AG04450 (cell line): ENCODE measurements at regions of chr4 and their contacts with region 1.

Region 1: GRCh38 chr4:80266253-80266901 is at the start of gene FGF5:
- DNase-seq: peak; percentile 85
- H3K4me3 ChIP-seq: peak within 1 kb of the TSS; percentile 63
- H3K27ac ChIP-seq: peak within 1 kb of the TSS; percentile 96
- H3K27me3 ChIP-seq: no peaks in the 10 kb centered on the region
- CTCF ChIP-seq: no peak
- polyA plus RNA-seq, gene FGF5: 39.9 and 40.7 TPM in 2 replicates

Region 2: GRCh38 chr4:80215449-80216052 is 50.8 kb before region 1 on chr4:
- CTCF ChIA-PET with region 1: interaction called, 13 read pairs
- POLR2A ChIA-PET with region 1: interaction called, 8 read pairs
- DNase-seq: no peak
- H3K4me3 ChIP-seq: no peak overlapping the region
- H3K27ac ChIP-seq: no peak overlapping the region
- H3K27me3 ChIP-seq: no peaks in the 10 kb centered on the region
- CTCF ChIP-seq: peak; percentile 67

Region 3: GRCh38 chr4:80255329-80256095 is 10.9 kb before region 1 on chr4:
- CTCF ChIA-PET with region 1: interaction called, 7 read pairs
- POLR2A ChIA-PET with region 1: interaction called, 25 read pairs
- DNase-seq: no peak
- H3K4me3 ChIP-seq: no peak overlapping the region
- H3K27ac ChIP-seq: no peak overlapping the region
- H3K27me3 ChIP-seq: no peaks in the 10 kb centered on the region
- CTCF ChIP-seq: no peak

Region 4: DNA sequence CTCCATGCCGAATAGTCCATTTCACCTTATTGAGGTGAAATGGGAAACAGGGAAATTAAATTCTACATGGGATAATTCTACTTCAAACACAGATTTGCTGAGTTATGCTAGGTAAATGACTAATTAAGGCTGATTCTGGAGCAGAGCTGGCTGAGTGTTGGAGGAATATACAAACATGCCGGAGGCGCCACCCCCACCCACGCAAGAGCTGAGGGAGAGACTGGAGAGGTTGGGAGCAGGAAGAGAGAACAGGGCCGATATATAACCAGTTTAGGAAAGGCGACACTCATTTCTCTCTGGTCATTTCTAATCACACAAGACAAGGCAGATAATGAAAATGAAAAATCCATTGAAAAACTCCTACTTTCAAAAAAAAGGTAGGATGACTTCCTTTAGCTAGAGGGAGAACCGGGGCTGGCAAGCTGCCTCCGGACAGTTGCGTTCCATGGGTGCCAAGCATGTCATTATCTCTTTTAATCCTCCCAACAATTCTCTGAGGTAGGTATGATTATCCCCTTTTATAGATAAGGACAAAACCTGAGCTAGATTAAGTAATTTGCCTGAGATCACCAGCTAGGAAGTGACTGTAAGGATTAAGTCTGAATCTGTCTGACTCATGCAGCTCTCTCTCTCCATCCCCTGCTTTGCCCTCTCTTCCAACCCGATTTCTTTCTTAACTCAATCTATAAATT is 41.5 kb after region 1 on chr4:
- CTCF ChIA-PET with region 1: no interaction called
- POLR2A ChIA-PET with region 1: interaction called, 13 read pairs
- DNase-seq: no peak
- H3K4me3 ChIP-seq: peak overlapping the region; percentile 41
- H3K27ac ChIP-seq: peak overlapping the region; percentile 54
- H3K27me3 ChIP-seq: no peaks in the 10 kb centered on the region
- CTCF ChIP-seq: no peak

Region 5: GRCh38 chr4:80335554-80336358 is 69.4 kb after region 1 on chr4 and contains the start of gene CFAP299:
- CTCF ChIA-PET with region 1: interaction called, 5 read pairs
- POLR2A ChIA-PET with region 1: interaction called, 12 read pairs
- DNase-seq: peak; percentile 75
- H3K4me3 ChIP-seq: peak within 1 kb of the TSS; percentile 82
- H3K27ac ChIP-seq: no peak within 1 kb of the TSS
- H3K27me3 ChIP-seq: no peaks in the 10 kb centered on the region
- CTCF ChIP-seq: peak; percentile 66
- polyA plus RNA-seq, gene CFAP299: 1.4 and 1.9 TPM in 2 replicates